Mammary epithelial cell (primary cell): ENCODE measurements at regions of chr2 and their contacts with region 1.

Region 1: DNA sequence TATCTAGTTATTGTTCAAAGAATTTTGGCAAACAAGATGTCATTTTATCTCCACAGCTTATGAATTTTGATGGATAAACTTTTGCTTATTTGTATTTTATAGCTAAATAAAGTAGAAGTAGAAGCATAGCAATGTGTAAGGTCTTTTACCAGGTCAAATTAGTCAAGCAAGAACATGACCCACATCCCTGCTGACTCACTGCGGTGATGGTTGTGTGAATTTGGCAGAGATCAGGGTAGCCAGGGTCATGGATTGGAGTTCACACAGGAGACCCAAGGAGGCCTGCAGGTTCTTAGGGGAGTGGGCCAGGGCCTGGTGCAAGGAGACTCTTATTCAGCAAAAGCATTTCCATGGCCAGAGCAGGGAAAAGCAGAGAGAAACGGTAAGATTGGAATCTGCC is 18.7 kb downstream of the SP140 start:
- DNase-seq: peak; percentile 16
- H3K4me3 ChIP-seq: no peak overlapping the region
- H3K27ac ChIP-seq: no peak overlapping the region
- H3K4me1 ChIP-seq: no peaks in the 10 kb centered on the region
- H3K27me3 ChIP-seq: no peaks in the 10 kb centered on the region
- CTCF ChIP-seq: no peak

Region 2: DNA sequence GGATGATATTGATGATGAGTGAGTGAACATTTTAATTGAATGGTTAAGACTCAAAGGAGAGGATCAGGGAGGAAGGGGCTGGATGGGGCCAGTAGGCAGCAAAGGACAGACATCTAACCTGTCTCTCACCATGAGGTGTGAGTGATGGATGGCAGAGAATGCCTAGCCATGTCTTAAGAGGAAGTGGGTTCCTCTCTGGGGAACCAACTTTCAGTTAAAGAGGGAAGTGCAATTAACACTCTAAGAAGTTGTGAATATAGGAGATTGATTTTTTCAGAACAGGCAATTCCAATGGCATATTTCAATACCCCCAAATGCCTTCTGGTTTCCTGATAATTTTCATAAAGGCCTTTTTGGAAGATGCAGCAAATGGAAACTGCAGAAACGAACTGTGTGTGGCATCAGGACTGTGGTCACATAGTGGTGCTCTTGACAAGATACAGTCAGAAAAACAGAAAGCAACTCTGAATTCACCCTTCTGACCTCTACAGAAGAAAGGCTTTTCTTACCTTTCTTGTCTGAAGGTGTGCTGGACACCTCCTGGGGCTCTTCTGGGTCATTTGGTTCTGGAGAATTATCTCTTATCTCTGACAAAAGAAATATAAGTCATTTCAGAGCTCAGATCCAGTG is 34.7 kb before region 1 on chr2:
- CTCF ChIA-PET with region 1: no interaction called
- dilution Hi-C with region 1: loop called (anchors 5 kb)
- in situ Hi-C with region 1: no loop called
- intact Hi-C with region 1: no loop called
- DNase-seq: no peak
- H3K4me3 ChIP-seq: no peak overlapping the region
- H3K27ac ChIP-seq: no peak overlapping the region
- H3K4me1 ChIP-seq: no peaks in the 10 kb centered on the region
- H3K27me3 ChIP-seq: no peaks in the 10 kb centered on the region
- CTCF ChIP-seq: no peak

Region 3: GRCh38 chr2:230296917-230297316 is 52.7 kb after region 1 on chr2:
- CTCF ChIA-PET with region 1: no interaction called
- dilution Hi-C with region 1: no loop called
- in situ Hi-C with region 1: no loop called
- intact Hi-C with region 1: loop called (anchors 5 kb)
- DNase-seq: no peak
- H3K4me3 ChIP-seq: no peak overlapping the region
- H3K27ac ChIP-seq: no peak overlapping the region
- H3K4me1 ChIP-seq: no peaks in the 10 kb centered on the region
- H3K27me3 ChIP-seq: no peaks in the 10 kb centered on the region
- CTCF ChIP-seq: no peak